Heart right ventricle (tissue), 16 donors: ENCODE measurements at regions of chr1 and their contacts with region 1.

Region 1: DNA sequence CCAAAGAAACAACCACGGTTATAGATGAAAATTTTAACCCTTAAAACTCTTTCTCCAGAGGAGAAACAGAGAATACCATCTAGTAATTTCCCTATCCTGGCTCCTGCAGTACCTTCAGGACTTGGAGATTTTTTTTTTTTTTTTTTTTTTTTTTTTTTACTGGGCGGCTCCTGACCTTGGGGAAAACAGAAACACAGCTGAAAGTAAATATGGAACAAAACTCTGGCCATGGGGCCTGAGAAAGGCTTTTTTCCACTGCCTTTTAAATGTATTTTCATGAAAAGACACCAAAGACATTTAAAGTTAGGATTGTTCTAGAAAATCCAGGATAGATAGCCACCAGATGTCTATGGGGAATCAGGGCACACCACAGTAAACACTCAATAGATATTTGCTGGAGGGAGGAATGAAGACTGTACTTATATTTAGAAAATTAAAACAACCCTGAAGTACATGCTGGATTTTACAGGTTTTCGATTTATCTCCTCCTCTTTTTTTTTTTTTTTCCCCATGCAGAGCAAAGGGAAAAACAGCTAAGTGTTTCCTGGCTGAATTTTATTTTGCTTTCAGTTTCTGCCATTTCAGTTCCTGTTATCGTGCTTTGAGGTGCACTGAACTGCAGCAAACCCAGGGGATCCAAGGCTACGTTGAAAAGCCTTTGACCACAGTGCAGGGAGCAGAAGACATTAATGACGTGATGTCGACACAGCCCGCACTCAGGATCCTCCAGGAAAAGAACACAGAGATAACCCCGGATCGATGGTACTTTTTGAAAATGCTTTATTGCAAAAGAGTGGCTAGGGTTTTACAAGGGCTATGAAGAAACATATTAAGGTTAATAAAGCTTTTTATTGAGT is 35.7 kb upstream of the CNN3 start:
- DNase-seq: peak in 1 of 2 donors; percentile 29
- ATAC-seq: peak; percentile 56 to 78 (median 73)
- H3K4me3 ChIP-seq: peak overlapping the region; percentile 7 to 55 (median 47)
- H3K27ac ChIP-seq: peak overlapping the region; percentile 46 to 88 (median 73)
- H3K4me1 ChIP-seq: peaks cover 2 to 25% (median 13%) of the 10 kb centered on the region in 9 donors
- H3K27me3 ChIP-seq: no peaks in the 10 kb centered on the region
- CTCF ChIP-seq: no peak

Region 2: DNA sequence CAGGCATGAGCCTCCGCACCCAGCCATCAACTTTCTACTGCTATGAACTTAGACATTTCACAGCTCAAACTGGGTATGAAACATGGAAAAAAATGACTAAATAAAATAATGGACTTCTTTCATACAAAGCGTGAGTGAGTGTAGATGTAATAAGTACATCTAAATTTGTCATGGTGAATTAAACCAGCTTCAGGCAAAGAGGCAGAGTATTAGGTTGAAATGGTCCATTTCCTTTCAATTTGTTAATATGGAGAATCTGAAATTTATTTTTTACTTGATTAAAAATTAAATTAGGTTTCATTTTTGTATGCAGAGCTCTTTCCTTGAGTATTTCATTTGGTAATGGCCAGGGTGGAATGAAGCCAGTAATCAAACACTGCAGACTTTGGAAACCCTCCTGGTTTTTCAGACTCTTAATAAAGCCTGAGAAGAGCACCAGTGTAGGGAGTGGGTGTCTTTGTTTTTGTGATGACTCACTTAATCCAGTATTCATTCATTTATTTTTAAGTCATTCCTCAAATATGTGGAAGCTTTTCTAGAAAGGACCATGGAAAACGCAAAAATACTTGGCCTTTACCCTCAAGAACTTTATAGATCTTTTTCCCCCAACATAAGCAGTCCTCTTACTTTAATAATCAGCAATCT is 60.9 kb after region 1 on chr1:
- intact Hi-C with region 1: loop called in 1 of 10 experiments (anchors 5 kb)
- DNase-seq: peak in 1 of 2 donors; percentile 27
- ATAC-seq: peak in 7 of 8 donors; percentile 44 to 89 (median 73)
- H3K4me3 ChIP-seq: no peak overlapping the region
- H3K27ac ChIP-seq: peak overlapping the region in 7 of 10 donors; percentile 44 to 78 (median 50)
- H3K4me1 ChIP-seq: peaks cover 0 to 42% (median 33%) of the 10 kb centered on the region in 9 donors
- H3K27me3 ChIP-seq: no peaks in the 10 kb centered on the region
- CTCF ChIP-seq: no peak